Endothelial cell of umbilical vein (primary cell): ENCODE measurements at regions of chr12 and their contacts with region 1.

Region 1: GRCh38 chr12:49288412-49288853 is 6.5 kb upstream of the PRPH start:
- DNase-seq: peak; percentile 57
- H3K4me3 ChIP-seq: no peak overlapping the region
- H3K27ac ChIP-seq: no peak overlapping the region
- H3K4me1 ChIP-seq: peaks cover 2% of the 10 kb centered on the region
- H3K27me3 ChIP-seq: peaks cover 4 to 9% of the 10 kb centered on the region in 2 experiments
- CTCF ChIP-seq: peak; percentile 75 to 80
- POLR2A ChIP-seq: no peak

Region 2: DNA sequence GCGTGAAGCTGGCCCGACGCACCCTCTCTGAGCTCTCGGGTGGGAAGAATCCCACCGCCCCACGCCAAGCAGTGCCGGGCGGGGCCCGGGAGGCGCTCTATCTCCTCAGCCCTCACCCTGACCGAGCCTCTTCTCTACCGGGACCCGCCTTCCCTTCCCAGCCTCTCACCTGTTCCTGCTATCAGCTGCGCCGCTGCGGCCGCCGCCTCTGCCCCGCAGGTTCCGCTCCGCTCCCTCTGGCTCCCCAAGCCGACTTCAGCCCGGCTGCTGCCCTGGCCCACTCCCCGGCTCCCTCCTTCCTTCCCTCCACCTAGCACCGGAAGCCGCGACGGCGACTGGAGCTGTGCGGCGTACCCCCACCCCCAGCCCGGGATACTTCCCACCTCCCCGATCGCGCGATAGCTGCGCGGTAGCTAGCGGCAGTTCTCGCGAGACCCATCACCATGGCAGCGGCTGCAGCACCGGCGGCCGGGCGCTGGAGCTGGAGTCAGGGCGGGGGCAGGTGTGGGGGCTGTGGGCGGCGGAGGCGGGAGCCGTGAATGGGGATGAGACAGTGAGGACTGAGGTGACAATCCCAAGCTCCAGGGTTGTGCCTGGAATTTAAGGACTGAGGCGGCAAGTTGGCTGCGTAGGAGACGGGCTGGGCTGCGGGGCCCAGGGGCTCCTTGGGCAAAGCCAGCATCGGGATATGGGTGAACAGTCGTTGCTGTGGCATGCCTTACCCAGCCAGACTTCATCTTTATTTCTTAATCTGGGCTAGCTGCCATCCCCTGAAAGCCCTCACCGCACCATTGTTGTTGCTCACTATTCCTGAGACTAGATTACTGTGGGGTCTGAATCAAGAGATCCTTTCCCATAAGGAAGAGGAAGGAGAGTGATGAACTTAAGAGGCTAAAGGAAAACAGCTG is 331.0 kb before region 1 on chr12 and contains the start of gene ARF3:
- CTCF ChIA-PET with region 1: no interaction called
- POLR2A ChIA-PET with region 1: no interaction called
- dilution Hi-C with region 1: no loop called
- intact Hi-C with region 1: no loop called
- DNase-seq: peak; percentile 94
- H3K4me3 ChIP-seq: peak within 1 kb of the TSS; percentile 71 to 99 (median 90)
- H3K27ac ChIP-seq: peak within 1 kb of the TSS; percentile 76
- H3K4me1 ChIP-seq: peaks cover 31% of the 10 kb centered on the region
- H3K27me3 ChIP-seq: no peaks in the 10 kb centered on the region
- CTCF ChIP-seq: no peak
- POLR2A ChIP-seq: peak; percentile 54
- total RNA-seq, gene ARF3: 172 and 187 TPM in 2 replicates

Region 3: GRCh38 chr12:49304161-49304560 is 15.7 kb after region 1 on chr12:
- CTCF ChIA-PET with region 1: interaction called, 24 read pairs
- POLR2A ChIA-PET with region 1: no interaction called
- dilution Hi-C with region 1: no loop called
- intact Hi-C with region 1: no loop called
- DNase-seq: no peak
- H3K4me3 ChIP-seq: no peak overlapping the region
- H3K27ac ChIP-seq: no peak overlapping the region
- H3K4me1 ChIP-seq: no peaks in the 10 kb centered on the region
- H3K27me3 ChIP-seq: peaks cover 12 to 22% of the 10 kb centered on the region in 2 experiments
- CTCF ChIP-seq: no peak
- POLR2A ChIP-seq: no peak

Region 4: DNA sequence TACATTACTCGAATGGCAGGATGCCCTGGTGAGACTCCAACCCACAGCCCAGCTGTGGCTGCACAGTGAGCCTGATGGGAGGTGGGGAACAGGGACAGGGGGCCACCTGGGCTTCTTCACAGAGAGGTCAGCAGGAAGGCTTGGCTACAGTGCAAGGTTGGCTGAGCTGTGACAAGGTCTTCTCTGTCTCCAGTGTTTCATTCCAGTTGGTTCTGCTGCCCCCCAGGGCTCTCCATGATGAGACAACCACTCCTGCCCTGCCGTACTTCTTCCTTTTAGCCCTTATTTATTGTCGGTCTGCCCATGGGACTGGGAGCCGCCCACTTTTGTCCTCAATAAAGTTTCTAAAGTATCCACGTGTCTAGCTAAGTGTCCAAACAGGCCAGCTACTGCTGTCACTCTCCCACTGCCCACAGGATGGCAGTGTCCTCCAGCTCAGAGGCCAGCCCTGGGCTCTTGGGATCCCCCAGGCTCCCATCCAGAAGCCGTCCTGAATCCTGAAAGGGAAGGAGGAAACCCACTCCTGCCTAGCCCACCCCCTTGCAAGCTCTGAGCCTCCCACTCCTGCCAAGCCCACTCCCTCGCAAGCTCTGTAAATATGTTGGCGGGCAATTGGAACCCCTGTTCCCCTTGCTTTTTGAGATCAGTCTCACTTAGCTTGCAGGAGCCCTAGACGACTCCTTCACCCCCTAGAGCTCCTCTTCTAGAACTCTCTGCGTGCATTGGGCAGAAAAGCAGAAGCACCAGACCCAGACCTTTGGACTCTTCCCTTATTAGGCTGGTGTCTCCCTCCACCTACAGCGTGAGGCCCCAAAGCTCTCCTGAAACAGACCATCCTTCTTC is 43.2 kb after region 1 on chr12:
- CTCF ChIA-PET with region 1: interaction called, 46 read pairs
- POLR2A ChIA-PET with region 1: no interaction called
- dilution Hi-C with region 1: no loop called
- intact Hi-C with region 1: no loop called
- DNase-seq: peak; percentile 75
- H3K4me3 ChIP-seq: no peak overlapping the region
- H3K27ac ChIP-seq: no peak overlapping the region
- H3K4me1 ChIP-seq: no peaks in the 10 kb centered on the region
- H3K27me3 ChIP-seq: peaks cover 33% of the 10 kb centered on the region in 2 experiments
- CTCF ChIP-seq: peak; percentile 81 to 86
- POLR2A ChIP-seq: no peak

Region 5: GRCh38 chr12:49342066-49342913 is 53.9 kb after region 1 on chr12:
- CTCF ChIA-PET with region 1: interaction called, 162 read pairs
- POLR2A ChIA-PET with region 1: no interaction called
- dilution Hi-C with region 1: no loop called
- intact Hi-C with region 1: loop called (anchors 1 kb)
- DNase-seq: peak; percentile 76
- H3K4me3 ChIP-seq: peak overlapping the region in 2 of 3 experiments; percentile 24 to 25
- H3K27ac ChIP-seq: no peak overlapping the region
- H3K4me1 ChIP-seq: peaks cover 31% of the 10 kb centered on the region
- H3K27me3 ChIP-seq: peaks cover 50 to 71% of the 10 kb centered on the region in 2 experiments
- CTCF ChIP-seq: peak; percentile 92 to 94
- POLR2A ChIP-seq: no peak